Caco-2 (cell line): ENCODE measurements at regions of chr15 and their contacts with region 1.

Region 1: GRCh38 chr15:98286831-98287230 is 326.3 kb downstream of the ARRDC4 start:
- DNase-seq: no peak
- H3K4me3 ChIP-seq: no peak overlapping the region
- H3K4me3 Mint-ChIP-seq: no peak overlapping the region
- H3K27ac Mint-ChIP-seq: no peak overlapping the region
- H3K4me1 ChIP-seq: no peaks in the 10 kb centered on the region
- H3K4me1 Mint-ChIP-seq: no peaks in the 10 kb centered on the region
- H3K27me3 ChIP-seq: no peaks in the 10 kb centered on the region
- H3K27me3 Mint-ChIP-seq: peaks cover 7% of the 10 kb centered on the region
- CTCF ChIP-seq: no peak

Region 2: DNA sequence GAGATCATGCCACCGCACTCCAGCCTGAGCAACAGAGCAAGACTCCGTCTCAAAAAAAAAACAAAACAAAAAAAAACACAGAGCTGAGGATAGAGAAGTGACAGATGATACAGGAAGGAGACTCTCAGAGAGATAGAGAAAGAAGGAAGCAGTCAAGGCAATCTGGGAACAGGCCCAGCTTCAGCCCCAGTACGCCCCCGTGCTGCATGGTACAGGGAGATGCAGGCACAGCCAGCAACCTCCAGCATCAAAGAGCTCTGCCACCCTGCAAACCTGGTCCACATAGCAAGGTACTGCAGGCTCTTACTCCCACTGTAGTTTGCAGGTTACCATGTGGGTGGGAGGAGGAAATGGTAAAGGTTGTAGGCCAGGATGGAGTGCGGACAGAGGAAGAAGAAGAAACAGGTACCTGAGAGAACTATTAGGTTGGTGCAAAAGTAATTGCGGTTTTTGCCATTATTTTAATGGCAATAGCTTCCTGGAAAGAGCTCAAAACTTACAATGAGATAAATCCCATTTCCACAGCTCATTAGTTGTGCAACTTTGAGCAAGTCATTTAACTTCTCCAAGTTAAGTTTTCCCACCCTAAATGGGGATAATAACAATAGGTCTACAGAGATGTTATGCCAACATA is 73.4 kb before region 1 on chr15:
- CTCF ChIA-PET with region 1: no interaction called
- POLR2A ChIA-PET with region 1: no interaction called
- intact Hi-C with region 1: loop called (anchors 10 kb)
- DNase-seq: no peak
- H3K4me3 ChIP-seq: no peak overlapping the region
- H3K4me3 Mint-ChIP-seq: no peak overlapping the region
- H3K27ac Mint-ChIP-seq: no peak overlapping the region
- H3K4me1 ChIP-seq: no peaks in the 10 kb centered on the region
- H3K4me1 Mint-ChIP-seq: no peaks in the 10 kb centered on the region
- H3K27me3 ChIP-seq: no peaks in the 10 kb centered on the region
- H3K27me3 Mint-ChIP-seq: peaks cover 8% of the 10 kb centered on the region
- CTCF ChIP-seq: no peak